Lower leg skin (tissue), 4 donors: ENCODE measurements at regions of chr6 and their contacts with region 1.

Region 1: DNA sequence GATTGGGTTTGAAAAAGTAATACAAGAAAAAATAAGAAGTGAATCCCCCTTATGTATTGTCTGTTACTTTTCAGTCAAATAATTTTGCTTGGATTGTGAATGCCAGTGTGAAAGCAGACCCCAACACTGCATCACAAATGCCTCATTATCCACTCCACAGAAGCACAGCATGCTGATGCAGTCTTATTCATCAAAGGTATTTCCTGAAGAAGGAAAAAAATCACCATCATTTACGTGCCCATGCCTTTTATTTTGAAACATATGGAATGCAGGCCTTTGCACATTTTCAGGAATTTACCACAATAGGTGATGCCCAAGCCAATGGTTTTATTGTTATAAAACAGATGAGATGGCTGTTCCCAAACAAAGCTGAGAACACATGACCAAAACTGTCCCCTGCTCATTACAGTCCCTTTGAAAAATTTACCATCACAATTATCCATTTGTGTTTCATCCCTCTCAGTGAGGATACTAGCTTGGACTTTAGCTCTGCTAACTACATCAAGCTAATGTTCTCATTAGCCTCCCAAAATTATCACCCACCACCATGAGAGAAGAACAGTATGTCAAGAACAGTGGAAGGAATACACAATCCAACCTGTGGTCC is 180.6 kb upstream of the HTR1E start:
- DNase-seq: no peak
- H3K4me3 ChIP-seq: no peak overlapping the region
- CTCF ChIP-seq: no peak
- POLR2A ChIP-seq: no peak

Region 2: DNA sequence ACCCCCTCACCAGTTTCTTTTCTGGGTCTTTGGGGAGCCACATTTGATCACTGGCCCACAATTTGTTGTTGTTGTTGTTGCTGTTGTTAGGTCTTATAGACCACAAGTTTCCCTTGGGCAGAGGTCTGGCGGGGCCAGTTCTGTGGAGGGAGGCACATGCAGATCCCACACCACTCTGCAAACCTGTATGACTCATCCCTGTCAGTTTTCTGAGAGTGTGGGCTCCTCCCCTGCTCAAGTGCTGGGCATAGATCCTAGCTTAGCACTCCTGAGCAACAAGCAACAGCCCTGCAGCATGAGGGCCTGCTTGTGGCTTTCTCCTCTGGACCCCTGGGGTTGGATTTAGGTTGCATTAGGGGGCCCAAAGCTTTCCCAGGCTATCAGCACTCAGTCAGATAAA is 230.5 kb before region 1 on chr6:
- intact Hi-C with region 1: no loop called
- DNase-seq: no peak
- H3K4me3 ChIP-seq: no peak overlapping the region
- CTCF ChIP-seq: no peak
- POLR2A ChIP-seq: no peak

Region 3: DNA sequence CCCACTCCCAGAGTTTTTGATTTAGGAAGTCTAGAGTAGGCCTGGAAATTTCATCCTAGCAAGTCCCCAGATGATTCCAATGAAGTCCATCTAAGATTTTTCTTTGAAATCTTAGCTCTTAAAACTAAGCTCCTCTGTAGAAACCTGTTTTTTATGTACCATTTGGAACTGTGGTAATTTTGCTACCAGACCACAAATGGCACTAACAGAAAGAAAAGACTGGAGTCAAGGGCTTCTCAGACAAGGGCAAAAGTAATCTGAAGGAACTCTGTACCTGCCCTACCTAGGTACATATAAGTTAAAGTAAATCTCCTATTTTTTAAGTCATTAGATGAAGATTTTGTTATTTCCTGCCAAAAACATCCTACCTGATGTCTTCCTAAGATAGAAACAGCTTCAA is 25.6 kb after region 1 on chr6:
- intact Hi-C with region 1: loop called (anchors 2 kb)
- DNase-seq: no peak
- H3K4me3 ChIP-seq: no peak overlapping the region
- CTCF ChIP-seq: no peak
- POLR2A ChIP-seq: no peak